Activated CD4-positive, alpha-beta T cell treated with anti-CD3 and anti-CD28 coated beads for 36 hours (primary cell): ENCODE measurements at regions of chr17 and their contacts with region 1.

Region 1: GRCh38 chr17:49694847-49695683 is 12.7 kb downstream of the SLC35B1 start:
- DNase-seq: peak; percentile 85
- ATAC-seq: no peak
- H3K4me3 Mint-ChIP-seq: no peak overlapping the region
- H3K27ac Mint-ChIP-seq: peak overlapping the region; percentile 90
- H3K4me1 Mint-ChIP-seq: peaks cover 36% of the 10 kb centered on the region
- H3K27me3 Mint-ChIP-seq: no peaks in the 10 kb centered on the region

Region 2: DNA sequence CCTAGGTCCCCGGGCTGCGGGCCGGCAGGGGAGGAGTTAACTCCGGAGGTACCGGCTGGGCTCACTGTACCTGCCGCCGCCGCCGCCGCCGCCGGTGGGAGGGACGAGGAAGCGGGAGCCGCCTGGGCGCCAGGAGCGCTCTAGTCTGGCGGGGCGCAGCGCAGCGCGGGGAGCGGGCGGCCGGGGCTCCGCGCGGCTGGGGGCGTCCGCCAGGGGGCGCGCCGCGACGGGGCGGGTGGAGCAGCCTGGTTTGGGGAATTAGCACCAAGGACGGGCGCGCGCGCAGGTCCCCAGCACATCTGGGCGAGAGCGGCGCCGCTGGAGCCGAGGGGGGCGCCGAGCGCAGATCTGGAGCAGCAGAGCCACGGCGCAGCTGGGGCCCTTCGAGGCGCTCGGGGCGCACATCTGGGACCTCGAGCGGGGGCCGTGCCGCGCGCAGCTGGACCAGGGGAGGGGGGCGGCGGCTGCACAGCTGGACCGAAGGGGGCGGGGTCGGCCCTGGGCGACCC is 119.4 kb before region 1 on chr17 and contains the start of gene NXPH3:
- CTCF ChIA-PET with region 1: interaction called, 458 read pairs
- POLR2A ChIA-PET with region 1: no interaction called
- intact Hi-C with region 1: loop called (anchors 1 kb)
- DNase-seq: peak; percentile 86
- ATAC-seq: peak; percentile 87
- H3K4me3 Mint-ChIP-seq: peak within 1 kb of the TSS; percentile 61
- H3K27ac Mint-ChIP-seq: no peak within 1 kb of the TSS
- H3K4me1 Mint-ChIP-seq: peaks cover 3% of the 10 kb centered on the region
- H3K27me3 Mint-ChIP-seq: peaks cover 40% of the 10 kb centered on the region
- total RNA-seq, gene NXPH3: 0.09 TPM

Region 3: GRCh38 chr17:49851387-49852291 is 156.6 kb after region 1 on chr17:
- CTCF ChIA-PET with region 1: interaction called, 7 read pairs
- POLR2A ChIA-PET with region 1: no interaction called
- intact Hi-C with region 1: loop called in 1 of 2 experiments (anchors 1 kb)
- DNase-seq: peak; percentile 83
- ATAC-seq: peak; percentile 74
- H3K4me3 Mint-ChIP-seq: peak overlapping the region; percentile 76
- H3K27ac Mint-ChIP-seq: peak overlapping the region; percentile 84
- H3K4me1 Mint-ChIP-seq: peaks cover 13% of the 10 kb centered on the region
- H3K27me3 Mint-ChIP-seq: peaks cover 1% of the 10 kb centered on the region